PC-9 (cell line): ENCODE measurements at regions of chr1 and their contacts with region 1.

Region 1: DNA sequence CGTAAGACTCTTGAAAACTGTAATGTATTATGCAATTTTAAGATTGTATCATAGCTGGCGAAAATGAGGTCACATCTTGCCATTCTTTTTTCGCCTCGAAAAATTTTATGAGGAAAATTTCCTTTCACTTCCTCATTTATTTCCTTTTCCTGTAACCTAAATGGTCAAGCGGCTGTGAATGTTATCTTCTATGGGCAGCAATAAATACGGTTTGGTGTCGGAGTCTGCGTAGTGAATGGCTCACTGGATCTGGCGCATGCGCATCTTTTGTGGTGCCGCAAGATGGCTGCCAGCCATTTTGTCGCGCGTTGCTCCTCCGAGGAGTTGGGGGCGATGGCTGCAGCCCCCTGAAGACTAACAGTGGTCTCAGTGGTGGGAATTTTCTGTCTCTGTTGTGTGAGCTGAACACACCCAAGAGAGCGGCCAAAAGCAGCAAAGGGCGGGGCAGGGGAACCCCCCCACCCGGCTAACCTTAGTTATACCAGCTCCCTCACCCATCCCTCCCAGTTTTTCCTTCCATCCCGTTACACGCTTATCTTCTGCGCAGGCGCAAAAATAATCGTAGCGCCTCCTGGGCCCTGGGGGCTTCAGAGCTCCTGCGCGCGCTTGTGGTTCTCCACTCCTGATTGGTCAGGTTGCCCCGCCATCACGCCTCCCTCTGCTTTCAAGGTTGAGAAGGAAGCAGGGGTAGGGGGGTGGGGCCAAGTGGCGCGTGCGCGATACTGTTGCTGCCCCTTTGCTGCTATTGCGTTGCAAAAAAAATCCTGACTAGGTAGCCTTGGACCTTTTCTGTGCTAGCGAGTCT is at the start of gene RPRD2:
- DNase-seq: peak; percentile 98 to 99
- H3K4me3 ChIP-seq: peak within 1 kb of the TSS; percentile 73
- H3K27ac ChIP-seq: peak within 1 kb of the TSS; percentile 94
- H3K4me1 ChIP-seq: peaks cover 15% of the 10 kb centered on the region
- H3K27me3 ChIP-seq: no peaks in the 10 kb centered on the region
- CTCF ChIP-seq: 0 out of 2 replicates have a peak, but pooled peaks have one; percentile 12
- total RNA-seq, gene RPRD2: 24.3 and 36.2 TPM in 2 replicates

Region 2: GRCh38 chr1:150235852-150236613 is 127.6 kb before region 1 on chr1 and contains the start of gene ANP32E:
- CTCF ChIA-PET with region 1: no interaction called
- POLR2A ChIA-PET with region 1: interaction called, 13 read pairs
- intact Hi-C with region 1: no loop called
- DNase-seq: peak; percentile 93 to 99
- H3K4me3 ChIP-seq: peak within 1 kb of the TSS; percentile 92
- H3K27ac ChIP-seq: peak within 1 kb of the TSS; percentile 82
- H3K4me1 ChIP-seq: peaks cover 25% of the 10 kb centered on the region
- H3K27me3 ChIP-seq: no peaks in the 10 kb centered on the region
- CTCF ChIP-seq: no peak
- total RNA-seq, gene ANP32E: 63.3 and 63.5 TPM in 2 replicates